ENCODE measurements at regions of chr3 and their contacts with region 1.

Region 1: GRCh38 chr3:30342319-30343060 is 263.9 kb upstream of the TGFBR2 start:
- DNase-seq: peak in 1 of 2 donors; percentile 51
- H3K4me3 ChIP-seq: no peak overlapping the region
- H3K27ac ChIP-seq: peak overlapping the region; percentile 21 to 62
- H3K4me1 ChIP-seq: no peaks in the 10 kb centered on the region
- H3K27me3 ChIP-seq: no peaks in the 10 kb centered on the region
- CTCF ChIP-seq: no peak
- POLR2A ChIP-seq: no peak

Region 2: GRCh38 chr3:30401971-30402370 is 59.5 kb after region 1 on chr3:
- intact Hi-C with region 1: no loop called
- DNase-seq: no peak
- H3K4me3 ChIP-seq: no peak overlapping the region
- H3K27ac ChIP-seq: no peak overlapping the region
- H3K4me1 ChIP-seq: no peaks in the 10 kb centered on the region
- H3K27me3 ChIP-seq: no peaks in the 10 kb centered on the region
- CTCF ChIP-seq: no peak
- POLR2A ChIP-seq: no peak

Region 3: GRCh38 chr3:30421266-30421665 is 78.8 kb after region 1 on chr3:
- intact Hi-C with region 1: loop called (anchors 5 kb)
- DNase-seq: no peak
- H3K4me3 ChIP-seq: no peak overlapping the region
- H3K27ac ChIP-seq: no peak overlapping the region
- H3K4me1 ChIP-seq: no peaks in the 10 kb centered on the region
- H3K27me3 ChIP-seq: no peaks in the 10 kb centered on the region
- CTCF ChIP-seq: no peak
- POLR2A ChIP-seq: no peak